Activated CD4-positive, alpha-beta T cell treated with anti-CD3 and anti-CD28 coated beads for 36 hours (primary cell): ENCODE measurements at regions of chr18 and their contacts with region 1.

Region 1: DNA sequence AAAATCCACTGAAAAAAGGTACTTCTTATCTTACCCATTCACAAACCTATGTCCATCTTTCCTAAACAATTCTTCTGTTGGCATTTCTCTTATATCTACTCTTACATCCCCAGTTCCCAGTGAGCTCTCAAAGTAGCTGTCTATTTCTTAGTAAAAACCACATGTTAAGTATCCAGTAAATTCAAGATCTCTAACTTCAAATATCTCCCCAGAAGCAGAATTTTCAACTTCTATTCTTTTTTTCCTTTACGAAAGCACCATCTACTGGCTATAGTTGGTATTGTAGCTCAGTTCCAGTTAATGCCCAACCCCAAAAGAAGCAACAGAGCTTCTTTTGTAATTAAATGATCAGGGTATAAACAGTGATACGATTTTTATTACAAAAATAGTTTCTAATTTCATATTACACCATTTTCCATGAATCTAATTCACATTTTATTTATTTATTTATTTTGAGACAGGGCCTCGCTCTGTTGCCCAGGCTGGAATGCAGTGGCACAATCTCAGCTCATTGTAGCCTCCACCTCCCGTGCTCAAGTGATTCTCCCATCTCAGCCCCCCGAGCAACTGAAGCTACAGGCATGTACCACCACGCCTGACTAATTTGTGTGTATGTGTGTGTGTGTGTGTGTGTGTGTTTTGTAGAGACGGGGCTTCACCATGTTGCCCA is 28.5 kb downstream of the HRH4 start:
- DNase-seq: no peak
- ATAC-seq: peak; percentile 45
- H3K4me3 Mint-ChIP-seq: no peak overlapping the region
- H3K27ac Mint-ChIP-seq: peak overlapping the region; percentile 40
- H3K4me1 Mint-ChIP-seq: peaks cover 16% of the 10 kb centered on the region
- H3K27me3 Mint-ChIP-seq: peaks cover 23% of the 10 kb centered on the region

Region 2: DNA sequence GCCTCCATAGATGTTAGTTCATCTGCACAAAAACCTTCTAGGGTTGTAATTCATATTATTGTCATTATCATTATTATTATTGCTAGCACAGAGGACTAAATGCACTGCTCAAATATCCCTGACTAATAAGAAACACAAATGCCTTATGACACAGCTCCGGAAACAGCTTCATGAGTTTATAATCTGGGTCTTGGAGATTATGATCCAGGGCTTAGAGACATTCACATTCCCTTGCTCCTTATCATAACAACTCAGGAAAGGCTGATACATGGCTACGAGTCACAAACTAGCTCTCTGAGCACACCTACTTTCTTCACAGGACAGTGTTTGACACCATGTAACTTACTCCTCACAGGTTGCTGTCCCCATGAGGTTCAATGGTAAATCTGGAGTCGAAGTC is 576.6 kb before region 1 on chr18:
- CTCF ChIA-PET with region 1: no interaction called
- POLR2A ChIA-PET with region 1: no interaction called
- intact Hi-C with region 1: no loop called
- DNase-seq: no peak
- ATAC-seq: no peak
- H3K4me3 Mint-ChIP-seq: no peak overlapping the region
- H3K27ac Mint-ChIP-seq: no peak overlapping the region
- H3K4me1 Mint-ChIP-seq: no peaks in the 10 kb centered on the region
- H3K27me3 Mint-ChIP-seq: no peaks in the 10 kb centered on the region

Region 3: DNA sequence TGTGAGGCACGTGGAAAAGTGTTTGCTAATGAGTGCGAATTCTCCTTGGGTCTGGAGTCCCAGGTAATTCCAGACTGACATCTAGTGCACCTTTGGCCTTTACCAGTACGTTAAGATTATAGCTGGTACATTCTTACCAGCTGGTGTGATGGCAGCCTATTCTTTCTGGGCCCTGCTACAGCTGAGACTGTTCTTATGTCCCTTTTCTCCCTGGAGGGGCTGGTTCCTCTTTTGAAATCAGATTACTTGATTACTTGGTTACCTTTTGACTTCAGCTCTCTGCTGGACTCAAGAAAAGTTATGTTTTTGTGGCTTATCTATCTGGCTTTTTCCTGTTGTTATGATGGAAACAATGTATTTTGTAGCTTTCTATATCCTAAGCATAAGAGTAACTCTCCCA is 335.6 kb before region 1 on chr18:
- CTCF ChIA-PET with region 1: no interaction called
- POLR2A ChIA-PET with region 1: no interaction called
- intact Hi-C with region 1: no loop called
- DNase-seq: no peak
- ATAC-seq: no peak
- H3K4me3 Mint-ChIP-seq: no peak overlapping the region
- H3K27ac Mint-ChIP-seq: no peak overlapping the region
- H3K4me1 Mint-ChIP-seq: no peaks in the 10 kb centered on the region
- H3K27me3 Mint-ChIP-seq: no peaks in the 10 kb centered on the region

Region 4: DNA sequence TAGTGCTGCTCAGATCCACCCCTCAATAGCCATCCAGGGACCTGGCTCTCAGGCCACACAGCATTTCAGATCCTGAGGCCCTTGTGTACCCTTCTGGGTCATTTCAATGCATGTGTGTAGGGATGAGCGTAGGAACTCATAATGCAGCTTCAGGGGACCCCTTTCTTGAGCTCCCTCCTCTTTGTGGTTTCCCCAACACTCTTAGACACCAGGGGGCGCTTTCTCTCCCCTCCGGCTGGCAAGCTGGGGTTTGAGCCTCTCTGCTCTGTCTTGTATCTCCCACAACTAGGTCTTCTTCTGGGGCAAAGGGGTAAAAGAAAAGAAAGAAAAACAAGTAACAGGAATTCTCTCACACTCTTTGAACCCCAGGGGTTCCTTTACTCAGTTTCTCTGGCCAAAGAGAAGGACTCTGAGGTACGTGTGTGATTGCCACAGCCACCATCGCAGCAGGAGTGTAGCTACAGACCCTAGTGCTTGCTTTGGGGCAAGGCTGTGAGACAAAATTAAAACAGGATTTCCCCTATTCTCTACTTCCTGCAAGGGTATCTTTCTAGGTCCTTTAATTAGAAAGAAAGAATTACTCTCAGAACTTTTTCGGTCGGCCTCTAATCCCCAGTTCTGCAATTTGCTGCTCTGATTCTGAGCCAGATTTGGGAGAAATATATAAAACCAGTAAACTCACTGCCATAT is 312.1 kb before region 1 on chr18:
- CTCF ChIA-PET with region 1: interaction called, 76 read pairs
- POLR2A ChIA-PET with region 1: interaction called, 5 read pairs
- intact Hi-C with region 1: loop called (anchors 1 to 2 kb)
- DNase-seq: peak; percentile 75
- ATAC-seq: no peak
- H3K4me3 Mint-ChIP-seq: no peak overlapping the region
- H3K27ac Mint-ChIP-seq: no peak overlapping the region
- H3K4me1 Mint-ChIP-seq: peaks cover 6% of the 10 kb centered on the region
- H3K27me3 Mint-ChIP-seq: no peaks in the 10 kb centered on the region

Region 5: GRCh38 chr18:24271381-24272331 is 217.3 kb before region 1 on chr18:
- CTCF ChIA-PET with region 1: no interaction called
- POLR2A ChIA-PET with region 1: no interaction called
- intact Hi-C with region 1: no loop called
- DNase-seq: peak; percentile 56
- ATAC-seq: peak; percentile 91
- H3K4me3 Mint-ChIP-seq: peak overlapping the region; percentile 64
- H3K27ac Mint-ChIP-seq: no peak overlapping the region
- H3K4me1 Mint-ChIP-seq: peaks cover 3% of the 10 kb centered on the region
- H3K27me3 Mint-ChIP-seq: peaks cover 35% of the 10 kb centered on the region

Region 6: DNA sequence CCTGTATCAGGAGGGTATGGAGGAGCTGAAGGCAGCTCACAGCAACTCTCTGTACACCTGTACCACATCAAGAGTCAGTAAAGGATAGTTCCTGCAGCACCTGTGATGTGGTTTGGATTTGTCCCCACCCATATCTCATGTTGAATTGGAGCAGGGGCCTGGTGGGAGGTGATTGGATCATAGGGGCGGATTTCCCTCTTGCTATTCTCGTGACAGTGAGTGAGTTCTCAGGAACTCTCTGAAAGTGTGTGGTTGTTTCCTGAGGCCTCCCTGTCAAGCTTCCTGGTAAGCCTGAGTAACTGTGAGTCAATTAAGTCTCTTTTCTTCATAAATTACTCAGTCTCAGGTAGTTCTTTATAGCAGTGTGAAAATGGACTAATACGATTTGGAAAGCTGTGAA is 120.2 kb before region 1 on chr18:
- CTCF ChIA-PET with region 1: interaction called, 209 read pairs
- POLR2A ChIA-PET with region 1: no interaction called
- intact Hi-C with region 1: no loop called
- DNase-seq: peak; percentile 77
- ATAC-seq: peak; percentile 88
- H3K4me3 Mint-ChIP-seq: peak overlapping the region; percentile 22
- H3K27ac Mint-ChIP-seq: peak overlapping the region; percentile 77
- H3K4me1 Mint-ChIP-seq: peaks cover 28% of the 10 kb centered on the region
- H3K27me3 Mint-ChIP-seq: peaks cover 3% of the 10 kb centered on the region

Region 7: DNA sequence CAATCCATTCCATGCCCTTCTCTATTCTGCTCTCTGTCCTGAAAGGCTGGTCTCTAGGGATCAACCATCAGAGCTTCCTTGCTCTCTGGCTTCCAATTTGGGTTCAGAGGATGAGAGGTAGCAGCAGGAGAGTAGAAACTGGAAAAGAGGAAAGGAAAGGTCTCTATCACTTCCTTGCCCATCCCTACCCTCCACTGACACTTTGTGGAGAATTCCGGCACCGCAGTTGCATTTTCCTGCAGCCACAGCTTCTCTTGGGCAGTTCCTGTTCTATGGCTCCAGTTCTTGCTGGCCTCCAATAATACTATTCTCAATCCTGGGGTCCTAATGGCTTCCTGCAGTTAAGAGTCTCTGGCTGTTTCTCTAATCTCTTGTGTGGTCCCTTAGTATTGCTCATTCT is 75.8 kb before region 1 on chr18:
- CTCF ChIA-PET with region 1: no interaction called
- POLR2A ChIA-PET with region 1: no interaction called
- intact Hi-C with region 1: loop called in 1 of 2 experiments (anchors 5 kb)
- DNase-seq: no peak
- ATAC-seq: no peak
- H3K4me3 Mint-ChIP-seq: no peak overlapping the region
- H3K27ac Mint-ChIP-seq: no peak overlapping the region
- H3K4me1 Mint-ChIP-seq: peaks cover 28% of the 10 kb centered on the region
- H3K27me3 Mint-ChIP-seq: peaks cover 31% of the 10 kb centered on the region

Region 8: GRCh38 chr18:24446953-24447538 is 41.9 kb before region 1 on chr18:
- CTCF ChIA-PET with region 1: interaction called, 9 read pairs
- POLR2A ChIA-PET with region 1: no interaction called
- intact Hi-C with region 1: loop called in 1 of 2 experiments (anchors 2 kb)
- DNase-seq: no peak
- ATAC-seq: no peak
- H3K4me3 Mint-ChIP-seq: no peak overlapping the region
- H3K27ac Mint-ChIP-seq: no peak overlapping the region
- H3K4me1 Mint-ChIP-seq: peaks cover 8% of the 10 kb centered on the region
- H3K27me3 Mint-ChIP-seq: no peaks in the 10 kb centered on the region

Region 9: DNA sequence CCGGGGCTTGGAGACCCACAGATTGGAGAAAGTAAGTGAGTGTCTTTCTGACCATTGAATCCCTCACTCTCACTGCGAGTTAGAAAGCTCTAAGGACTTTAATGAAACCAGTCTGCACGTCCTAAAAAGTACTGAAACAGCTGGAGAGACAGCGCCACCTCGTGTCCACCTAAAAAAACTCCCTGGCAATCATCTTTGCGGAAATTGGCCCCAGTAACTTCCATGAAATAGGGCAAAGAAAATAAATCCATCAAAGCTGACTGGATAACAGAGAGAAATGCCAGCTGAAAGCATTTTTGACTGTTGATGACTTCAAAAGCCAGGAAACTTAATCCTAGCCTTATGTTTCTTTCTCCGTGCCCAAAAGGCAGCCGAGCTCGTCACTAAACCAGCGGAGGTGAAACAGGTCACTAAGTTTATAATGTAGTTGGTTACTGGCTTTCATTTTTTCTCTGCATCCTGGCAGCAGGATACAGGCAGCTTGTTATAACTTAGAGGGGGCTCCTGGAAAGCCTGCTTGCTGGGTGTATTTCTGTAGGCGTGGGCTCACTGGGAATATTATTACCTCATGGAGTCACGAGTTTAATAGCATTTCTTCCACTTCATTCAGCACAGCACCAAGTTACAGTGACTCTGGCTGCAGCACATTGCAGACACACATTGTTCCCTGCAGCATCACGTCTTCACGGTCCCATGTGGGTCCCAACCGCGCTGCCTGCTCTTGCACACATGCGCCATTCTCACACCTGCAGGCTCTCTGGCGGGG is 238.0 kb after region 1 on chr18:
- CTCF ChIA-PET with region 1: interaction called, 26 read pairs
- POLR2A ChIA-PET with region 1: no interaction called
- intact Hi-C with region 1: loop called (anchors 1 kb)
- DNase-seq: peak; percentile 79
- ATAC-seq: no peak
- H3K4me3 Mint-ChIP-seq: no peak overlapping the region
- H3K27ac Mint-ChIP-seq: no peak overlapping the region
- H3K4me1 Mint-ChIP-seq: no peaks in the 10 kb centered on the region
- H3K27me3 Mint-ChIP-seq: peaks cover 5% of the 10 kb centered on the region